Head of caudate nucleus (tissue), 42 donors: ENCODE measurements at regions of chr15 and their contacts with region 1.

Region 1: GRCh38 chr15:34337557-34338306 is at the start of gene SLC12A6:
- DNase-seq: peak; percentile 73 to 96 (median 93)

Region 2: GRCh38 chr15:34223904-34224596 is 113.7 kb before region 1 on chr15:
- intact Hi-C with region 1: loop called (anchors 10 kb)
- DNase-seq: no peak

Region 3: DNA sequence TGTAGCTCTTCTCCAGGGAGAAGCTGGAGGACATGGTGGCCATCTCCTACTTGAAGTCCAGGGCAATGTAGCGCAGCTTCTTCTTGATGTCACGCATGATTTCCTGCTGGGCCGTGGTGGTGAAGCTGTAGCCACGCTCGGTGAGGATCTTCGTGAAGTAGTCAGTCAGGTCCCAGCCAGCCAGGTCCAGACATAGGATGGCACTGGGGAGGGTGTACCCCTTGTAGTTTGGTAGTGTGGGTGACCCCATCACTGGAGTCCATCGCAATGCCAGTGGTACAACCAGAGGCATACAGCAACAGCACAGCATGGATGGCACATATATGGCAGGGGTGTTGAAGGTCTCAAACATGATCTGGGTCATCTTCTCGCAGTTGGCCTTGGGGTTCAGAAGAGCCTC is 36.2 kb after region 1 on chr15:
- intact Hi-C with region 1: no loop called
- DNase-seq: no peak